H1 (cell line): ENCODE measurements at regions of chr18 and their contacts with region 1.

Region 1: DNA sequence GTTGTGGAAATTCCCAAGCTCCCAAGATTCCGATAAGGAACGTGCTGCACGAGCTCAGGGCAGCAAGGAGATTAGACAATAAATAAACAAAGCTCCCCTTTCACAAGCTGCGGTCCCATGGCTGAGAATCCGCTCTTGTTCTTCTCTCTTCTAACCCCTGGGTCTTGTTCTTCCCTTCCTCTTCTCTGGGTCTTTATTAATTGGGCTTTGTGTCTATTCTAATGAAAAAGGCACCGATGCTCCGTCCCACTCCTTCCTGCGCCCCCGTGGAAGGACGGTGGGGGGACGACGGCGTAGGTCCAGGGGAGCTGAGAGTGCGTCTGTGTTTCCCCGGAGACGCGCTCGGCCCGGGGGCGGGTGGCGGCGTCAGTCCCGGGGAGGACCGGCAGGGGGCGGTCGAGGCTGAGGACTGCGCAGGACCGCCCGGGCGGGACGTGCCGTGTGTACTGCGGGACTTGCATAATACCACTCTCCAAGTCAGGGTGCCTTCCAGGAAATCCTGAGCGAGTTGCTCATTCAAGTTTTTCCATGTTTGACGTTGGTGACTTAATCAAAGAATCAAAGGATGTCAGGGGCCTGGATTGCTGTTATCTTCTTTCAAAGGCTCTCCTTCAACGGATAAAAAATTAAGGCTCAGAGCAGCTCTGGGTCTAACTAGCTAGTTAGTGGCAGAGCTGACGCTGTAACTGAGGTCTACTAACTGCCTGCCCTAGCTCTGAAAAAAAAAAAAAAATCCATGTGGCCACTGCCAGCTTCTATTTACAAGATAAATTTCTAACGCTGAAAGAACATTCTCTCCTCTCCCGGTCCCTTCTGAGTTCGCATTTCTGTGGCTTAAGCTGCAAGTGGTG is 321.4 kb downstream of the TGIF1 start:
- DNase-seq: peak; percentile 54 to 99
- H3K4me3 ChIP-seq: peak overlapping the region; percentile 29 to 63 (median 50); a peak in 7 of 8 replicates
- H3K27ac ChIP-seq: no peak overlapping the region
- H3K4me1 ChIP-seq: peaks cover 0 to 13% (median 6%) of the 10 kb centered on the region in 4 experiments; a peak in 5 of 7 replicates
- H3K27me3 ChIP-seq: no peaks in the 10 kb centered on the region
- CTCF ChIP-seq: peak; percentile 85 to 94 (median 88)
- EP300 ChIP-seq: no peak
- POLR2A ChIP-seq: no peak
- RAD21 ChIP-seq: peak; percentile 84 to 86

Region 2: DNA sequence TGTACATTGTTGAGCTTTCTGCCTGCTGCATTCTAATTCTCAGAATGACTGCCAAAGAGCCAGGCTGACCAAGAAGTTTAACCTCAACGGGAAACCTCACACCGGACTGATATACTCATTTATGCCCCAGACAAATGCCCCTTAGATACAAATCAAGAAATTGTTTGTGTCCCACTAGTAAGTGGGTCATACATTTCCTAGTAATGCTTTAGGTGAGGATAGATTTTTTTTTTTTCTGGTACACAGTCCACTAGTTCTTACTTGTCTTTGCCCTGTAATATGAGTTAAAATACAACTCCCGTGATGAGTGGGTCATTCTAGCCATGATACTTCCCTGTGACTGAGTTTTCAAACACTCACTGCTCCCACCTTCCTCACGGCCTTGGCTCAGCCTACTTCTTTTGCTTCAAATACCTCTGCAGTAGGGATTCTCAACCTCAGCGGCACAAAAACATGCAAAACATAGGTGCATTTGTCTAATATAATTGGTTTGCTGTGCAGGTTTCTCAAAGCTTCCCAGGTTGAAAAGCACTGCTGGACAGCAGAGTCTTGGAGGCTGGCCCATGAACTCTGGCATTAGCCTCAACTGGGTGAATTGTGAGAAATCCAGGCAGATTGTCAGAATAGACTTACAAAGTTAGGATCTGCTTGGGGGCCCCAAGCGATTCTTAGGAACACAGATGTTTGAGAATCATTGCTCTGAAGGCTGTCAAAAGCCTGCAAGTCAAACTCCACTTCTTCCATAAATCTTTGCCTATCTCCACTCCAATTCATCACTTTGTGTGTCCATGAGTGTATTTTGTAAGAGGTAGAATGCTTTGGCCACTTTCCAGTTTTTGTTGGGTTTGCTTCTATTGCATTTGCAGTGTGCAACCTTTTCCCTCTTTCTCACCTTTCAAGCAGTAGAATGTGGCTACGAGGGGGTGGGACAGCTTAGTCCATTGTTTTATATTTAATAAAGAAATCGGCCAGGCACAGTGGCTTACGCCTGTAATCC is 285.9 kb before region 1 on chr18:
- CTCF ChIA-PET with region 1: no interaction called
- POLR2A ChIA-PET with region 1: no interaction called
- DNase-seq: no peak
- H3K4me3 ChIP-seq: no peak overlapping the region
- H3K27ac ChIP-seq: no peak overlapping the region
- H3K4me1 ChIP-seq: peaks cover 0 to 7% (median 3%) of the 10 kb centered on the region in 4 experiments; a peak in 4 of 7 replicates
- H3K27me3 ChIP-seq: no peaks in the 10 kb centered on the region
- CTCF ChIP-seq: no peak
- EP300 ChIP-seq: no peak
- POLR2A ChIP-seq: no peak
- RAD21 ChIP-seq: no peak

Region 3: DNA sequence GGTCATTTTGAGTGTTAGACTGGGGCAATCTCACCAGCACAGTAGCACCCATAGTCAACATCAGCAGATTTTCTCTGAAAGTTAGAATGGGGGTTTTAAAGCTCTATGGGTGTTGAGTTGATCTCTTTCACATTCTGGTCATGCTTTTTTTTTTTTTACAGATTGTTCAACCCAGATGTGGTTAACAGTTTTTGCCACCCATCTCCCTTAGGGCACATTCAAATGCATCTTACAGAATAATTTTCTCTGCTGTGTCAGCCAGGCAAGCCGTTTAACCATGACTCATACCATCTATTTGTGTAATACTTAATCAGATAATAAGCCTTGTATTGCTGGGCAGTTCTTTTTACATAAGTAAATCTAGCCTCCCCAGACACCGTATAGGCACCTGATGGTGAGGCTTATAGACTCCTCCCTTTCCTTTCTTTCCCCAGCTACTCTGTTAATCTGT is 259.4 kb before region 1 on chr18:
- CTCF ChIA-PET with region 1: no interaction called
- POLR2A ChIA-PET with region 1: no interaction called
- DNase-seq: no peak
- H3K4me3 ChIP-seq: no peak overlapping the region
- H3K27ac ChIP-seq: no peak overlapping the region
- H3K4me1 ChIP-seq: peaks cover 0 to 9% (median 0%) of the 10 kb centered on the region in 4 experiments; a peak in 3 of 7 replicates
- H3K27me3 ChIP-seq: no peaks in the 10 kb centered on the region; a peak in 1 of 7 replicates
- CTCF ChIP-seq: no peak
- EP300 ChIP-seq: no peak
- POLR2A ChIP-seq: no peak
- RAD21 ChIP-seq: no peak

Region 4: DNA sequence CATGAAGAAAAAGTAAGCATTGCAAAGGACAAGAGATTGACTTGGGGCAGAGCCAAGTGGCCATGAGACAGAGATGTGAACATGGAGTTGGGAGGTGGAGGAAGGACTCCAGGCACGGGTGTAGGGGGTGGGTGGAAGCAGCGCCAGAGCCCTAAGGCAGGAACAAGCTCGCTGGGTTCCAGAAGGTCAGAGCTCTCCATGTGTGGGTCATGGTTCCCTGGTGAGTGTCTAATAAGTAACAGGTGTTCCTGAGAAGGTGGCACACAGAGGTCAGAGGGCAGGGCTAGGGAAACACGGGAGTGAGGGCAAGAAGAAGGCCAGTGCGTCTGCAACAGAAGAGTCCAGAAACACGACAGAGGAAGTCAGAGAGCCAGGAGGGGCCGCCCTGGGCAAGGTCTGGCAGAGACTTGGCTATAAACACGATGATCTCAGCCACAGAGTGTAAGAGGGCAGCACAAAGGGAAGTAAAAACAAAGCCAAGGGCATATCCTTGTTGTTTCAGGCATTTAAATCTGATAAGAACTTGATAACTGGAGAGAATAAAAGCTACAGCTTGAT is 60.6 kb before region 1 on chr18:
- CTCF ChIA-PET with region 1: interaction called, 25 read pairs
- POLR2A ChIA-PET with region 1: no interaction called
- DNase-seq: no peak
- H3K4me3 ChIP-seq: no peak overlapping the region
- H3K27ac ChIP-seq: no peak overlapping the region
- H3K4me1 ChIP-seq: no peaks in the 10 kb centered on the region
- H3K27me3 ChIP-seq: no peaks in the 10 kb centered on the region
- CTCF ChIP-seq: no peak
- EP300 ChIP-seq: no peak
- POLR2A ChIP-seq: no peak
- RAD21 ChIP-seq: no peak

Region 5: DNA sequence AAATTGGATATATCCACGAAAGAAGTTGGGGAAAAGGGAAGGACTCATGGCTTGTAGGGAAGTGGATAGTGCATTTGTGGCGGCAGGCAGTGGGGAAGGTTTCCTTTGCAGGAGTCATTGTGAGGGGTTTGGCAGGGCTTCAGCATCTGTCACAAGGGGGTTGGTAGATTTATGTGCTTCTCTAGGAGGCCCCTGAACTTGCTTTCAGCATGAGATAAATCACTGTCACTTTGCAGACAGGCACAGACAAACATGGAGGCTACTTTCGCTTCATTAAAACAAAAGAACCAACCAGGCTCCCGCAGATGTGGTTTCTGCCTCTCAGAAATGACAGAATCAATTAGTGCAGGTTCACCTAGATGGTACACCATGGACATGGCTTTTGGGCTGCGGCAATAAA is 19.4 kb after region 1 on chr18:
- CTCF ChIA-PET with region 1: interaction called, 43 read pairs
- POLR2A ChIA-PET with region 1: no interaction called
- DNase-seq: no peak
- H3K4me3 ChIP-seq: no peak overlapping the region
- H3K27ac ChIP-seq: no peak overlapping the region
- H3K4me1 ChIP-seq: peaks cover 0 to 6% (median under 1%) of the 10 kb centered on the region in 4 experiments; a peak in 2 of 7 replicates
- H3K27me3 ChIP-seq: no peaks in the 10 kb centered on the region
- CTCF ChIP-seq: no peak
- EP300 ChIP-seq: no peak
- POLR2A ChIP-seq: no peak
- RAD21 ChIP-seq: no peak

Region 6: DNA sequence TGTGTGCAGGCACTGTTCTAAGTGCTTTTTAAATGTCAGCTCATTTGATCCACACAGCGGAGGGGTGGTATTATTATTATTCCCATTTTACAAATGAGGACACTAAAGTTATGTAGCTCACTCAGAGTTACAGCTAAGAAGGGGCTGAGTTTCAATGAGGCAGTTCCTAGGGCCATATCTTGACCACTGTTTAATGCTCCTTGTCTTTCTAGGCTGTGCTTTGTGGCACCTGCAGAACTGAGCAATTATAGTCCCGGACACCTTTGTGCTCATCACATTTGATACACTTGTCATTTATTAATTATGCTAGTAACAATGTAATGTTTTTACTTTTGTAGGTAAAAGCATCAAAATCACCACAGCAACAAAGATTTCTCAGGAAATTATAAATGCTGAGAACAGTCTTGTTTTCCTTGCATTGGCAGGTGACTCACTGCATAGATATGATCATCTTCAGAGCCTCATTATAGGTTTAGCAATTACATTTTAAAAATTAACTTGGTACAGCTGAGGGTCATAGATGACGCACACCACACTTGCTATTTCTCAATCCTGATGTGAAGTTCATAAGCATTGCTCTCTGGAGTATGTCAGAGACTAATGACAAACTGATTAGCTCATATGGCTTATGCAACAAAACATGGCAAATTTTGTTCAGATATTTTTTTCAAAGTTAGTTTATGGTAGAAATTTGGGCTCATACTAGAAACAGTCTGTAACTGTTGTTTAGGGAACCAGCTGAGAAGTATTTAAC is 45.4 kb after region 1 on chr18:
- CTCF ChIA-PET with region 1: interaction called, 34 read pairs
- POLR2A ChIA-PET with region 1: interaction called, 4 read pairs
- DNase-seq: no peak
- H3K4me3 ChIP-seq: no peak overlapping the region
- H3K27ac ChIP-seq: no peak overlapping the region
- H3K4me1 ChIP-seq: peaks cover 0 to 4% (median 0%) of the 10 kb centered on the region in 4 experiments; a peak in 2 of 7 replicates
- H3K27me3 ChIP-seq: peaks cover 0 to 1% (median 0%) of the 10 kb centered on the region in 4 experiments; a peak in 1 of 7 replicates
- CTCF ChIP-seq: no peak
- EP300 ChIP-seq: no peak
- POLR2A ChIP-seq: no peak
- RAD21 ChIP-seq: no peak

Region 7: DNA sequence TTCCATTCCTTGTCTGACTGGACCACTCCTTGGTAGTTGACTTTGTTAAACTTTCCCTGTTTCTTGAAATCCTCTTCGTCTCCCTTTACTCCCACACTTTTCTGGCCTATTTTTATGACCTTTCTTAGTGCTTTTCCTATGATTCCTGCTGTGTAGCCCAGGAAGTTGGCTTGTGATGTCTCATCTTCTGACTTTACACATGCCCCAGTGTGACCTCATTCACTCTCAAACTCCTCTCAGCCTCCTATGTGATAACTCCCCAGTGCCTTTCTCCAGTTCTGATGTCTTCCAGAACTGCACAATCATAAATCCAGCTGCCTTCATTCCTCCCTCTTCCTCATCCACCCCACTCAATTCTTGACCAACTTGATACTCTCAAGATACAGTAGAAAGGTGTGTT is 86.2 kb after region 1 on chr18:
- CTCF ChIA-PET with region 1: interaction called, 13 read pairs
- POLR2A ChIA-PET with region 1: no interaction called
- DNase-seq: no peak
- H3K4me3 ChIP-seq: no peak overlapping the region
- H3K27ac ChIP-seq: no peak overlapping the region
- H3K4me1 ChIP-seq: no peaks in the 10 kb centered on the region
- H3K27me3 ChIP-seq: no peaks in the 10 kb centered on the region
- CTCF ChIP-seq: no peak
- EP300 ChIP-seq: no peak
- POLR2A ChIP-seq: no peak
- RAD21 ChIP-seq: no peak

Region 8: DNA sequence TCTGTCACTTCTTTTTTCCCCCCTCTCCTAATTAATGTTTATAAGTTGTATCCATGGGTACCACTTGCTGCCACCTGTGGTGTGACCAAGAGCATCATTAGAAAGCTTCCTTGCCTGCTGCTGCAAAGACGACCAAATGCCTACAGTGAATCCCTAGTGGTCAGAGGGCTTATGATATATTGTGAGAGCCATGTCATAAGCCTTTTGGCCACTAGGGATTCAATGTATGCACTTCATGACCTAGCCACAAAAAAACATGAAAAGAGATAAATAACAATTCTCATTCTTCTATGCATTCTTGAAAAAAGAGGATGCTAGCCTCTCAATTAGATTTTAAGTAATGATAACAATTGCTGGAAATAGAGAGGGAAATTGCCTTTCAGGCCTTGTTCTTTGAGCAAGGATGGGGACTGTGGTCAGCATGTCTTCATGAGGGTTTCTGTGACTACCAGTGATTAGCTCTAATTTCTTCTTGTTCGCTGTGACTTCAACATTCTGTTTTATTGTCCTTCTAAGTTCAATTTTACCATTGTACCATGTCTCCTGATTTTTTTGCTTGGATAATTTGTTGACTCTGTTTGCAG is 114.0 kb after region 1 on chr18:
- CTCF ChIA-PET with region 1: interaction called, 17 read pairs
- POLR2A ChIA-PET with region 1: no interaction called
- DNase-seq: no peak
- H3K4me3 ChIP-seq: no peak overlapping the region
- H3K27ac ChIP-seq: no peak overlapping the region
- H3K4me1 ChIP-seq: no peaks in the 10 kb centered on the region
- H3K27me3 ChIP-seq: no peaks in the 10 kb centered on the region
- CTCF ChIP-seq: peak in 2 of 3 experiments; percentile 68 to 86; a peak in 3 of 4 replicates
- EP300 ChIP-seq: no peak
- POLR2A ChIP-seq: no peak
- RAD21 ChIP-seq: peak in 1 of 2 experiments; percentile 25; a peak in 1 of 4 replicates